ENCODE measurements at regions of chr11 and their contacts with region 1.

Region 1: GRCh38 chr11:77091146-77091940 is 11.3 kb upstream of the OMP start:
- DNase-seq: peak; percentile 94
- ATAC-seq: peak; percentile 92
- H3K4me3 Mint-ChIP-seq: no peak overlapping the region
- H3K27ac Mint-ChIP-seq: peak overlapping the region; percentile 86; the same call in 1 of the 2 replicates
- H3K4me1 Mint-ChIP-seq: peaks cover 7% of the 10 kb centered on the region
- H3K27me3 Mint-ChIP-seq: no peaks in the 10 kb centered on the region
- CTCF ChIP-seq: peak; percentile 85

Region 2: GRCh38 chr11:77039491-77040400 is 51.6 kb before region 1 on chr11:
- CTCF ChIA-PET with region 1: interaction called, 20 read pairs
- POLR2A ChIA-PET with region 1: no interaction called
- DNase-seq: peak; percentile 71
- ATAC-seq: peak; percentile 68
- H3K4me3 Mint-ChIP-seq: peak overlapping the region; percentile 44
- H3K27ac Mint-ChIP-seq: no peak overlapping the region
- H3K4me1 Mint-ChIP-seq: peaks cover 7% of the 10 kb centered on the region
- H3K27me3 Mint-ChIP-seq: peaks cover 52% of the 10 kb centered on the region
- CTCF ChIP-seq: peak; percentile 52; the same call in 1 of the 2 replicates

Region 3: GRCh38 chr11:77066229-77067042 is 24.9 kb before region 1 on chr11 and contains the start of gene CAPN5:
- CTCF ChIA-PET with region 1: interaction called, 126 read pairs
- POLR2A ChIA-PET with region 1: interaction called, 5 read pairs
- DNase-seq: peak; percentile 95
- ATAC-seq: peak; percentile 89
- H3K4me3 Mint-ChIP-seq: peak within 1 kb of the TSS; percentile 90
- H3K27ac Mint-ChIP-seq: peak within 1 kb of the TSS; percentile 83
- H3K4me1 Mint-ChIP-seq: peaks cover 23% of the 10 kb centered on the region
- H3K27me3 Mint-ChIP-seq: peaks cover 21% of the 10 kb centered on the region
- CTCF ChIP-seq: no peak
- total RNA-seq, gene CAPN5: 24.0 to 27.4 TPM (median 24.3 TPM) in 3 replicates

Region 4: GRCh38 chr11:77113382-77114088 is 22.2 kb after region 1 on chr11:
- CTCF ChIA-PET with region 1: interaction called, 48 read pairs
- POLR2A ChIA-PET with region 1: interaction called, 3 read pairs
- DNase-seq: peak; percentile 60
- ATAC-seq: peak; percentile 65
- H3K4me3 Mint-ChIP-seq: no peak overlapping the region
- H3K27ac Mint-ChIP-seq: peak overlapping the region; percentile 64
- H3K4me1 Mint-ChIP-seq: peaks cover 12% of the 10 kb centered on the region
- H3K27me3 Mint-ChIP-seq: no peaks in the 10 kb centered on the region
- CTCF ChIP-seq: peak; percentile 45

Region 5: DNA sequence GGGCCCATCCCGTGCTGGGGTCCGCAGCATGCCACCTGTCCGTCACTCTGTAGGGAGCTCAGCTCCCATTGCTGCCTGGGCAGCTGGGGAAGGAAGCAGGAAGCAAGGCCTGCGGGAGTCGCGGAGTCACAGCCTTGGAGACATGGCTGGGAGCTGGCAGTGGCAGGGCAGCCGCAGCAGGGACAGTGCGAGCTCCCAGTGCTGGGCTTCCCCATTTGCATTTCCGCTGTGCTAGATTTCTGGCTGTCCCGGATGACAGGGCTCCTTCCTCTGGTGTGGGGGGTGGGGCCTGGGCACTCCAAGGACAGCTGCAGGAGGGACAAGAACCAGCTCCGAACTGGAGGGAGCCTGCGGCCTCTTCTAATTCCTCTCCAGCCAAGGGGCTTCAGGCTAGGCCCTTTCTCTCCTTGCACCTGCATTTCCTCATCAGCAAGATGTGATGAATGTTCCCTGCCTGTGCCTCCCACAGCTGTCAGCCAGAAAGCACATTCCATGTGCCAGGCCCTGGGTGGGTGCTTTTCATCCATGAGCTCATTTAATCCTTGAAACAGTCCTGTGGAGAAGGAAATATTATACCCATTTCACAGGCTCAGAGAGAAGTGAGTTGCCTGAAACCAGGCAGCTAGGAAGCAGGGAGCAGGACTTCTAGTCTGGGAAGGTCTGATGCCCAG is 84.7 kb after region 1 on chr11:
- CTCF ChIA-PET with region 1: interaction called, 11 read pairs
- POLR2A ChIA-PET with region 1: no interaction called
- DNase-seq: peak; percentile 66
- ATAC-seq: peak; percentile 76
- H3K4me3 Mint-ChIP-seq: no peak overlapping the region
- H3K27ac Mint-ChIP-seq: peak overlapping the region; percentile 88
- H3K4me1 Mint-ChIP-seq: peaks cover 54% of the 10 kb centered on the region
- H3K27me3 Mint-ChIP-seq: peaks cover 8% of the 10 kb centered on the region; the same call in 1 of the 2 replicates
- CTCF ChIP-seq: no peak

Region 6: DNA sequence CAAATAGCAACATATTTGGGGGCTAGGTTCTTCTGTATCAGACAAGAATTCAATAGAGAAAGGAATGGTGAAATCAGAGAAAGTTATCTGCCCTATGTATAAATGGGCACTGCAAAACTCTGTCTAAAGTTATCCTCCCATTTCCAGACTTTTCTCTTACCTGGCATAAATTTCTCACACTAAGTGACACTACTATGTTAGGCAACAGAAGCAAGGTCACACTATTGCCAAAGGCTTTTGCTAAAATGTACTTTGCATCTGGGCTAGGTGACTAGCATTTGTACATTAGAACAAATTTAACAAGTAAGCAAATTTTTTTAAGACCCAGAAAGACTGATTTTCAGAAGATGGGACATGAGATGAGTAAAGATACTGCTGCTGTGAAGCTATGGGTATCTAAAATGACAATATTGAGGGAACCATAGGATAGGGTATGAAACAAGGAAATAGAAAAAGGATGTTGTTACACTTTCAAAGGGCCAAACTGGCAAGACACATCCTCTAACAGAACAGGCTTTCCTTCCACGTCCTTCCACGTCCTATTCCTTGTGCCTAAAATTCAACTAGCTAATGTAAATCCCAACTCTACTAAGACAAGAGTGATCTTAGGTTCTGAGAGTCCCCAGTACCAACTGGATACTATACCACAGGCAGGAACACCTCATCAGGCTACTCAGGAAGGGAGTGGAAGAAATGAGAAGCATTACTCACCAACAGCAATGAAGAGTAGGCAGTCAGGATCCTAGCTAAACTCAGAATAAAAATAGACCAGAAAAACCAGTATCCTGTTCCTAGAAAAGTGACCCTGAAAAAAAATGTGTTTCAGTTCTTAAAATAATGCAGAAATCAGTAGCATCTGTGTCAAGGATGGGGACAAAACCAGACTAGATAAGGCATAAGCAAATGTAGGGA is 187.5 kb after region 1 on chr11:
- CTCF ChIA-PET with region 1: no interaction called
- POLR2A ChIA-PET with region 1: no interaction called
- DNase-seq: no peak
- ATAC-seq: no peak
- H3K4me3 Mint-ChIP-seq: no peak overlapping the region
- H3K27ac Mint-ChIP-seq: no peak overlapping the region
- H3K4me1 Mint-ChIP-seq: no peaks in the 10 kb centered on the region
- H3K27me3 Mint-ChIP-seq: no peaks in the 10 kb centered on the region
- CTCF ChIP-seq: no peak

Region 7: GRCh38 chr11:77322506-77322905 is 231.2 kb after region 1 on chr11:
- CTCF ChIA-PET with region 1: no interaction called
- POLR2A ChIA-PET with region 1: no interaction called
- DNase-seq: no peak
- ATAC-seq: no peak
- H3K4me3 Mint-ChIP-seq: no peak overlapping the region
- H3K27ac Mint-ChIP-seq: no peak overlapping the region
- H3K4me1 Mint-ChIP-seq: no peaks in the 10 kb centered on the region
- H3K27me3 Mint-ChIP-seq: no peaks in the 10 kb centered on the region
- CTCF ChIP-seq: no peak

Measured in WTC11 (cell line).